Activated B cell treated with CpG ODN at 0.5 μM for 24 hours (primary cell): ENCODE measurements at regions of chr13 and their contacts with region 1.

Region 1: GRCh38 chr13:99269627-99270241 is 11.6 kb upstream of the GPR18 start:
- DNase-seq: no peak
- ATAC-seq: peak; percentile 70
- H3K4me3 Mint-ChIP-seq: no peak overlapping the region
- H3K27ac Mint-ChIP-seq: peak overlapping the region; percentile 74
- H3K4me1 Mint-ChIP-seq: peaks cover 65% of the 10 kb centered on the region
- H3K27me3 Mint-ChIP-seq: no peaks in the 10 kb centered on the region
- CTCF ChIP-seq: peak; percentile 48

Region 2: DNA sequence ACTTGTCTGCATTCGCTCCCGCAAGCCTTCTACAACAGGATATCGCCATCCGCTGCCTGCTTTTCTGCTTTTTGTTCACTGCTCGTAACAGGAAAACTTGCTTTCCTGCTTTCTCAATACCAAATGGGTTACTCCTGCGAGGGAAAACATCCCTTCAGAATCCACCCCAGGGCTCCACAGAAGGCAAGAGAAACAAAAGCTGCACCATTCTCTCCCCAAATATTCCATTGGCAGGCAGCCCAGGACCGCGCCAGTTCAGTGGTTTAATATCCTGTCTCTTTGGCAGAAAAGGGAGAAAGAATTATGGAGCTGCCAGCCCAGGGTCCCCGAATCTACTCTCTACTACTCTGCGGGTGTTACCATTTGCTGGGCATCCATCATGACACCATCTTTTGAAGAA is 207.1 kb before region 1 on chr13:
- CTCF ChIA-PET with region 1: no interaction called
- POLR2A ChIA-PET with region 1: no interaction called
- intact Hi-C with region 1: no loop called
- DNase-seq: no peak
- ATAC-seq: no peak
- H3K4me3 Mint-ChIP-seq: no peak overlapping the region
- H3K27ac Mint-ChIP-seq: no peak overlapping the region
- H3K4me1 Mint-ChIP-seq: peaks cover 34% of the 10 kb centered on the region
- H3K27me3 Mint-ChIP-seq: peaks cover 2% of the 10 kb centered on the region
- CTCF ChIP-seq: no peak

Region 3: DNA sequence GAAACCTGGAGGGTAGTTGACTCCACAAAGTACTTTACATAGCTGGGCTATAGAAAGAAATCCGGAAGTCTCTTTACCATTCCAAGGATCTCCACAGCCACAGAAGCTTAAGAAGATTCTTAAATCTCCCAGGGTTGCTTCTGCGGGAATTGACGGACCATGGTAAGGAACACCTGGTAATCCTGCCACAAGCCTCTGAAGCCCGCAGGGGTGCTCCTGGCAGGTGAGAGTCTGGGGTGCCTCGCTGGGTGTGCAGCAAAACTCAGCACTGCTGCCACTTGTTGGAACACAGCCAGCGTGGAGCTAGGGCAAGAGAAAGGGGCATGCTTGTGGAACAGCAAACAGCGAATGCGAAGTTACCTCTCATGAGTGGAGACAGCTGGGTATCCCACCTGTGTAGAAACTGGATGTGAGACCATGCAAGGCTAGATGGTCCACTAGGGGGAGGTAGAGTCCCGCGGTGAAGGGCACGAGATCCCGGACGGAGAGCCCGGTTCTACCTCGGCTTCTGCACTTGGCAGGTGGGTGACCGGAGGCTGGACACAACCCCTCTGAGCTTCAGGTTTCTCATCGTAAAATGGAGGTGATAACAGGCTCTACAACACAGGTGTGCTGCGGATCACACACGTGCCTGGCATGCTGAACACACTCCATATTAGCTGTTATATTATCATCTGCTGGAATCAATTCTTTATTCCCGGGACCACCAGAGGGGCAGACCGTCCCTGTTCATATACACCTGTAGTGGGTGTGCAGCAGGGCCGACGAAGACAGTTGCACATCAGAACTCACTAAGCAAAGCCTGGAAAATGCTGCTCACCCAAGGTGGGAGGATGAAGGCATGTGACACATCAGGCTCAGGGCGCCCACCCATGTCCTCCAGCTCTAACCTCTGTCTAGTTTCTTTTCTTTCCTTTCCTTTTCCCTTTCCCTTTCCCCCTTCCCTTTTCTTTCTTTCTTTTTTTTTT is 93.1 kb before region 1 on chr13:
- CTCF ChIA-PET with region 1: interaction called, 370 read pairs
- POLR2A ChIA-PET with region 1: interaction called, 19 read pairs
- intact Hi-C with region 1: loop called (anchors 1 kb)
- DNase-seq: peak; percentile 64
- ATAC-seq: peak; percentile 90
- H3K4me3 Mint-ChIP-seq: peak overlapping the region; percentile 58
- H3K27ac Mint-ChIP-seq: peak overlapping the region; percentile 24
- H3K4me1 Mint-ChIP-seq: peaks cover 43% of the 10 kb centered on the region
- H3K27me3 Mint-ChIP-seq: peaks cover 2% of the 10 kb centered on the region
- CTCF ChIP-seq: no peak

Region 4: DNA sequence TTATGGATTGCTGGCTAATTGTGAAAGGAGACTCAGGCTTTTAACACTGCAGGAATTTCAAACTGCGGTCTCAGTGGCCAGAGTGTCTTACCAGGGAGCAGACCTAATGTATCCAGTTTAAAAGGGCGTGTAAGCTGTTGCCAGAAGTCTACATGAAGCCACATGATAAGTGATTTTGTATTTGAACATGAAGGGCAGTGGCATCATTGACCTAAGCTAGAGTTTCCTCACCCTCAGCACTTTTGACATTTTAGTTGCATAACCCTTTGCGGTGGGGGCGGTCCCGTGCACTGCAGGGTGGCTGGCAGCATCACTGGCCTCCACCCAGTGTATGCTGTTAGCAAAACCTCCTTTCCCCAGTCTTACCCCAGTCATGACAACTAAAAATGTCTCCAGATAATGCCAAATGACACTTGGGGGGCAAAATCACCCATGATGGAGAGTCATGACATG is 12.1 kb after region 1 on chr13:
- CTCF ChIA-PET with region 1: interaction called, 37 read pairs
- POLR2A ChIA-PET with region 1: interaction called, 31 read pairs
- intact Hi-C with region 1: loop called (anchors 1 kb)
- DNase-seq: peak; percentile 46
- ATAC-seq: peak; percentile 81
- H3K4me3 Mint-ChIP-seq: peak overlapping the region; percentile 75
- H3K27ac Mint-ChIP-seq: peak overlapping the region; percentile 95
- H3K4me1 Mint-ChIP-seq: peaks cover 95% of the 10 kb centered on the region
- H3K27me3 Mint-ChIP-seq: no peaks in the 10 kb centered on the region
- CTCF ChIP-seq: no peak

Region 5: GRCh38 chr13:99322297-99323103 is 52.8 kb after region 1 on chr13:
- CTCF ChIA-PET with region 1: interaction called, 16 read pairs
- POLR2A ChIA-PET with region 1: interaction called, 4 read pairs
- intact Hi-C with region 1: loop called (anchors 1 kb)
- DNase-seq: no peak
- ATAC-seq: peak; percentile 87
- H3K4me3 Mint-ChIP-seq: peak overlapping the region; percentile 56
- H3K27ac Mint-ChIP-seq: peak overlapping the region; percentile 91
- H3K4me1 Mint-ChIP-seq: peaks cover 66% of the 10 kb centered on the region
- H3K27me3 Mint-ChIP-seq: no peaks in the 10 kb centered on the region
- CTCF ChIP-seq: no peak

Region 6: GRCh38 chr13:99374994-99375737 is 105.4 kb after region 1 on chr13:
- CTCF ChIA-PET with region 1: interaction called, 217 read pairs
- POLR2A ChIA-PET with region 1: interaction called, 44 read pairs
- intact Hi-C with region 1: loop called (anchors 1 kb)
- DNase-seq: peak; percentile 78
- ATAC-seq: peak; percentile 80
- H3K4me3 Mint-ChIP-seq: peak overlapping the region; percentile 72
- H3K27ac Mint-ChIP-seq: peak overlapping the region; percentile 98
- H3K4me1 Mint-ChIP-seq: peaks cover 92% of the 10 kb centered on the region
- H3K27me3 Mint-ChIP-seq: no peaks in the 10 kb centered on the region
- CTCF ChIP-seq: no peak

Region 7: GRCh38 chr13:99442273-99442895 is 172.7 kb after region 1 on chr13:
- CTCF ChIA-PET with region 1: interaction called, 342 read pairs
- POLR2A ChIA-PET with region 1: interaction called, 45 read pairs
- intact Hi-C with region 1: loop called (anchors 1 kb)
- DNase-seq: no peak
- ATAC-seq: peak; percentile 78
- H3K4me3 Mint-ChIP-seq: no peak overlapping the region
- H3K27ac Mint-ChIP-seq: no peak overlapping the region
- H3K4me1 Mint-ChIP-seq: peaks cover 16% of the 10 kb centered on the region
- H3K27me3 Mint-ChIP-seq: peaks cover 2% of the 10 kb centered on the region
- CTCF ChIP-seq: peak; percentile 99

Region 8: DNA sequence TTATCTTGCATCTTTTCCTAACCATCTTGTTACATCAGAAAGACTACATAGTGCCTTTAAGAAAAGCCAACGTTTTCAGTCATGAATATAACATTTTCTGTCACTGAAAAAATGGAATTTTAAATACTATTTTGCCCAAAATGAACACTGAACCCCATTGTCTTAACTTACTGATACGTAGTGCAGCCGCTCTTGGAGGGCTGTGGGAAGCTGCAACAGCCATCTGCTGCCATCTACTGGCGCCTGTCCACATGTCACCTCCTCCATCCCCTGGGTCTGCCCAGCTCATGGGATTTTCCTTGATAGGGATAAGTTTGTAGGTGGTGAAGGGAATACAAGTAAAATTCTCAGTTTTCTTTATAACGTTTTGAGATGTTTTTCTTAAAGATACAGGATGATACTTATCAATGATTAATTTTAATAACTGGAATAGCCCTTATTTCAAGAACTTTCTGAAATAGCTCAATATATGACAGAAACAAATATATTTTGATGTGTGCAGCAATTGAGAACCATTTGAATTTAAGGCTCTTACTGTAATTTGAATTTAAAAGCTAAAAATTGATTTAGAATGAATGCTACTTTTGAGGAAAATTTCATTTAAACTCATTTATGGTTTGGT is 1245.2 kb after region 1 on chr13:
- CTCF ChIA-PET with region 1: no interaction called
- POLR2A ChIA-PET with region 1: no interaction called
- intact Hi-C with region 1: loop called (anchors 1 kb)
- DNase-seq: peak; percentile 49
- ATAC-seq: peak; percentile 82
- H3K4me3 Mint-ChIP-seq: no peak overlapping the region
- H3K27ac Mint-ChIP-seq: no peak overlapping the region
- H3K4me1 Mint-ChIP-seq: peaks cover 2% of the 10 kb centered on the region
- H3K27me3 Mint-ChIP-seq: no peaks in the 10 kb centered on the region
- CTCF ChIP-seq: peak; percentile 78